OCI-LY7 (cell line): ENCODE measurements at regions of chr12 and their contacts with region 1.

Region 1: DNA sequence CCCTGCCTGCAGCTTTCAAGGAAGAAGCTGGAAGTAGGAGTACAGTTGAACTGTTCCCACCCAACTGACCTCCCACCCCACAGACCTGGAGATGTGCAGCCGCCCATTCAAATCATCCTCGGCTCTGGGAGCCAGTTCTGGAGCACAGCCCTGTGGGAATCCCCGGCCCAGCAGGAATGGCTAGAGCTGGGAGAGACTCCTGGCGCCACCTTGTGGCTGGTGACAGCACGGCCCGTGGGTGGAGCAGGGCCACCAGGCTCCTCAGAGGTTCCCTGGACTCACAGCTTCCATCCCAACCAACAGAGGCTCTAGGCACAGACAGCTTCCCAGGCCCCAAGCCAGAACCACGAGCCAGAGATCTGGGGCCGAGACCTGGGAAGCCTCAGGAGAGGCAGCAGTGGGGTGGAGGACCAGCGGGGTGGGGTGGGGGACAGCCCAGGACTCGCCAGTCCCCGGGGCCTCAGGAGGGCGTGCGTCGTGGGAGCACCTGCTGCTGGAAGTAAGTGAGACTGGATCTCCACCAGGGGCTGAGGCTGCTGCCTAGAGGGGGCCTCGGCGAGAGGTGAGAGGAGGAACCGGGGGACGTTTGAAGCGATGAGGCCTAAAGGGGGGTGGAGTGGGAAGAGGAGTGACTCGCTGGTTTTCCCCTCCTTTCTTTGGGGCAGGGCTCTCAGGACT is 43.4 kb downstream of the RNF34 start:
- DNase-seq: peak; percentile 64
- H3K4me3 ChIP-seq: no peak overlapping the region
- H3K27ac ChIP-seq: no peak overlapping the region
- H3K4me1 ChIP-seq: no peaks in the 10 kb centered on the region
- CTCF ChIP-seq: peak; percentile 92

Region 2: DNA sequence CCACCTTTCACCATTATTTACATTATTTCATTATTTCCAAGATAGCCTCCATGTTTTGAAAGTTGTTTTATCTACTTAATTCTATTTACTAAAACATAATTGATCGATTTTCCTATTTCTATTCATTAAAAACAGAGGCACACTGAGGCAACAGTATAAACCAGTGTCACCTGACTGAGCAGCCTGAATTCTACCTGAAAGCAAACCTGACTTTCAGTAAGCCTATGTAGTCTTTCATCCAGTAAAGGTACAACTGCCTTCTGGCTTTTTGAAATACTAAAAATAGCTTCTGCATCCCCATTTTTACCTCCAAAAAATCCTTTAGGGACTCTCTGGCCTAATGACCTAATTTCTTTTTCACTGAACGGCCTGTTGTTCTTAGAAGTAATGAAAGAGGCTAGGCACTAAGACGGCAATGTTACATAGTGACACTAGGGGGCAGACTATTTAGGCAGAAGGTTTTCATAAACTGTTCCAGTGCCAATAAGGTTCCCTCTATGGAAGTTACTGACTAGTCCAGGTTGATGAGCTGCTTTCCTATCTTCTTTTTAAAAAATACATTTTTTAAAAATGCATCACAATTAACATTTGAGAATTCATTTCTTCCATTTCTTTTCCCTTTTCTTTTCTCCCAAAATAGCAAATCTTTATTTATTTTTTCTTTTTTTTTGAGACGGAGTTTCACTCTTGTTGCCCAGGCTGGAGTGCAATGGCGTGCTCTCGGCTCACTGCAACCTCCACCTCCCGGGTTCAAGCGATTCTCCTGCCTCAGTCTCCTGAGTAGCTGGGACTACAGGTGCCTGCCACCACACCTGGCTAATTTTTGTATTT is 108.6 kb before region 1 on chr12:
- CTCF ChIA-PET with region 1: interaction called, 4 read pairs
- POLR2A ChIA-PET with region 1: no interaction called
- intact Hi-C with region 1: loop called (anchors 1 kb)
- DNase-seq: peak; percentile 76
- H3K4me3 ChIP-seq: no peak overlapping the region
- H3K27ac ChIP-seq: no peak overlapping the region
- H3K4me1 ChIP-seq: no peaks in the 10 kb centered on the region
- CTCF ChIP-seq: peak; percentile 97

Region 3: DNA sequence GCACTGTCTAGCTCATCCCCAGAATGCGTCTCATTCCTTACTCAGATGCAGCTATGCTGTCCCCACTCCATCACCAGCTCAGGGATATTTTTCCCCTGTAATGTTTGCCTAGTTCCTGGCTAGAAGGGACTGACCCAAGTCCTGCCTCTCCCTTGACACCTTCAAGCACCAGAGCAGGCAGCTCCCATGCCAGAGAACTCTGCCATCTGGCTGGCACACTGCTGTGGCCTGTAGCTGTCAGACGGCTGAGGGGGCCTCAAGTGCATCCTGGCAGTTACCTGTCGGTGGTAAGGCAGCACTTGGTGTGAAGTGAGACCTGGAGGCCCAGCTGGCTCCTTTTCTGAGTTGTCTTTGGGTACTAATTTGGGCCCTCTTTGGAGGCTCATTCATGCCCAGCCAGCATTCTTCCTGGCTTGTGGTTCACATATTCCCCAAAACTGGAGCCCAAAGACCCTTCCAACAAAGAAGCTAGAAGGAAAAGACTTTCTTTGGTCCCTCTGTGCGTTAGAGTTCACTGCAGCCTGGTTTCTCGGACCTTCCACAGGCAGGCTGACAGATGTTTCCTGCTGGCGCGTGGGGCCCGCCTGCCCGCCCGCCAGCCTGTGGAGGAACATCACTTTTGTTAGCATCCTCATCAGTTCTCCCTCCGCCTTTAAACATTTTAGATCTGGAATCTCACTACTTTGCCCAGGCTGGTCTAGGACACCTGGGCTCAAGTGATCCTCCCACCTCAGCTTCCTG is 10.4 kb before region 1 on chr12:
- CTCF ChIA-PET with region 1: no interaction called
- POLR2A ChIA-PET with region 1: no interaction called
- intact Hi-C with region 1: no loop called
- DNase-seq: no peak
- H3K4me3 ChIP-seq: no peak overlapping the region
- H3K27ac ChIP-seq: no peak overlapping the region
- H3K4me1 ChIP-seq: no peaks in the 10 kb centered on the region
- CTCF ChIP-seq: no peak

Region 4: DNA sequence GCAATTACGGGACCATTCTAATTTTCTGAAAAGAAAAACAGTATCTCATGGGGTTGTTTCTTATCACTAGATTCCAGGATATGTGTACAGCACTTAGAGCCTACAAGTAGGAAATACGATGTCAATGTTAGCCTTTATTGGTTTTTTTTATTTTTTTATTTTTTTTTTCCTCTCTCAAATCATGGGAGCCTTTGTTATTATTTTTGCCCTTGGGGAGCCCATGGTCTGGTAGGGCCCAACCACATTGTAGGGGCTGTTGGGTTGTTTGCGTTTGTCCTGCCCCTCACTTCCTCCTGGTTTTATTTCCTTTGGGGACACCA is 220.2 kb after region 1 on chr12:
- CTCF ChIA-PET with region 1: no interaction called
- POLR2A ChIA-PET with region 1: no interaction called
- intact Hi-C with region 1: no loop called
- DNase-seq: no peak
- H3K4me3 ChIP-seq: peak overlapping the region; percentile 72
- H3K27ac ChIP-seq: peak overlapping the region; percentile 54
- H3K4me1 ChIP-seq: peaks cover 17% of the 10 kb centered on the region
- CTCF ChIP-seq: no peak

Region 5: GRCh38 chr12:121872546-121873215 is 429.3 kb after region 1 on chr12:
- CTCF ChIA-PET with region 1: no interaction called
- POLR2A ChIA-PET with region 1: no interaction called
- intact Hi-C with region 1: no loop called
- DNase-seq: no peak
- H3K4me3 ChIP-seq: no peak overlapping the region
- H3K27ac ChIP-seq: no peak overlapping the region
- H3K4me1 ChIP-seq: no peaks in the 10 kb centered on the region
- CTCF ChIP-seq: no peak